Activated CD4-positive, alpha-beta memory T cell treated with anti-CD3 and anti-CD28 coated beads for 36 hours (primary cell): ENCODE measurements at regions of chr17 and their contacts with region 1.

Region 1: GRCh38 chr17:68184816-68185436 is 62.9 kb upstream of the AMZ2 start:
- DNase-seq: peak; percentile 78
- H3K4me3 Mint-ChIP-seq: peak overlapping the region; percentile 50
- H3K27ac Mint-ChIP-seq: peak overlapping the region; percentile 77
- H3K4me1 Mint-ChIP-seq: peaks cover 80% of the 10 kb centered on the region
- H3K27me3 Mint-ChIP-seq: no peaks in the 10 kb centered on the region

Region 2: GRCh38 chr17:68172461-68172954 is 12.4 kb before region 1 on chr17:
- CTCF ChIA-PET with region 1: interaction called, 32 read pairs
- POLR2A ChIA-PET with region 1: no interaction called
- intact Hi-C with region 1: no loop called
- DNase-seq: peak; percentile 83
- H3K4me3 Mint-ChIP-seq: no peak overlapping the region
- H3K27ac Mint-ChIP-seq: no peak overlapping the region
- H3K4me1 Mint-ChIP-seq: peaks cover 16% of the 10 kb centered on the region
- H3K27me3 Mint-ChIP-seq: no peaks in the 10 kb centered on the region

Region 3: GRCh38 chr17:68205251-68205807 is 20.4 kb after region 1 on chr17:
- CTCF ChIA-PET with region 1: interaction called, 107 read pairs
- POLR2A ChIA-PET with region 1: interaction called, 58 read pairs
- intact Hi-C with region 1: loop called (anchors 1 kb)
- DNase-seq: peak; percentile 93
- H3K4me3 Mint-ChIP-seq: peak overlapping the region; percentile 81
- H3K27ac Mint-ChIP-seq: peak overlapping the region; percentile 89
- H3K4me1 Mint-ChIP-seq: peaks cover 32% of the 10 kb centered on the region
- H3K27me3 Mint-ChIP-seq: no peaks in the 10 kb centered on the region

Region 4: GRCh38 chr17:68247445-68248198 is 62.7 kb after region 1 on chr17 and contains the start of gene AMZ2:
- CTCF ChIA-PET with region 1: no interaction called
- POLR2A ChIA-PET with region 1: interaction called, 22 read pairs
- intact Hi-C with region 1: no loop called
- DNase-seq: peak; percentile 97
- H3K4me3 Mint-ChIP-seq: peak within 1 kb of the TSS; percentile 90
- H3K27ac Mint-ChIP-seq: peak within 1 kb of the TSS; percentile 99
- H3K4me1 Mint-ChIP-seq: peaks cover 48% of the 10 kb centered on the region
- H3K27me3 Mint-ChIP-seq: no peaks in the 10 kb centered on the region
- total RNA-seq, gene AMZ2: 134 to 146 TPM

Region 5: GRCh38 chr17:68291844-68292695 is 107.1 kb after region 1 on chr17:
- CTCF ChIA-PET with region 1: no interaction called
- POLR2A ChIA-PET with region 1: interaction called, 4 read pairs
- intact Hi-C with region 1: loop called (anchors 2 kb)
- DNase-seq: peak; percentile 91
- H3K4me3 Mint-ChIP-seq: peak overlapping the region; percentile 82
- H3K27ac Mint-ChIP-seq: peak overlapping the region; percentile 88
- H3K4me1 Mint-ChIP-seq: peaks cover 63% of the 10 kb centered on the region
- H3K27me3 Mint-ChIP-seq: no peaks in the 10 kb centered on the region